ENCODE measurements at regions of chr16 and their contacts with region 1.

Region 1: GRCh38 chr16:84532291-84532724 is 27.8 kb upstream of the MEAK7 start:
- DNase-seq: peak; percentile 52 to 76 (median 71)
- ATAC-seq: peak; percentile 63 to 93 (median 91)
- H3K4me3 ChIP-seq: no peak overlapping the region
- H3K27ac ChIP-seq: peak overlapping the region; percentile 46 to 84 (median 62)
- H3K4me1 ChIP-seq: peaks cover 12 to 42% (median 30%) of the 10 kb centered on the region in 12 donors
- H3K27me3 ChIP-seq: no peaks in the 10 kb centered on the region
- CTCF ChIP-seq: no peak
- POLR2A ChIP-seq: no peak

Region 2: DNA sequence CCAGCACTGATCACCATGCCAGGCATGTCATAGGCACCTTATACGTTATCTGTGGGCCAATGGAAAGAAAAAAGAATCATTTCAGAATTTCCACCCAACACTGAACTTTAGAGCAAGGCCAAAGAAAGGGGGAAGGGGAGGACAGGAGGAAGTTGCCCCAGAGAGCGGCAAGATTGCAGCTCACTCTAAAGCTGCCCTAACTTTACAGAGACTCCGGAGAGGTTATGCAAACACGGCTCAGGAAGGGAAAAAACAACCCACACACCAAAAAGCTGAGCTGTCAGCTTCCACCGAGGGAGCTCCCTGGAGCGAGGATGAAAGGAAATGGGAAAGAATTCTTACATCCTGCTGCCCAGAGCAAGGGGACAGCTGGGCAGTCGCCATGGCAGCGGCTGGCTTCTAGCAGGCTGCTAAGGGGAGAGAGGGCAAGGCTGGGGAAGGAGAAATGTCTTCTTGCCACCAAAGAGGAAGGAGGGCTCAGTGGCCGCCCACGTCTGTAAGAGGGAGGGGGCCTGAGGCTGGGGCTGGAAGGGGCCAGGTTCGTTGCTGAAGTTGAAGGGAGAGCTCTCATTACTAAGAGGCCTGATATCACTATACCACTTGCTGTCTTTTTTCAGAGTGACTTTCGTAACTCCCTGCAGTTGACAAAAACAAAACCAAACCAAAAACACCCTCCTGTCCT is 67.4 kb after region 1 on chr16:
- intact Hi-C with region 1: loop called in 1 of 10 experiments (anchors 5 kb)
- DNase-seq: peak; percentile 40 to 84 (median 73)
- ATAC-seq: peak in 3 of 4 donors; percentile 57 to 74 (median 66)
- H3K4me3 ChIP-seq: peak overlapping the region in 8 of 12 donors; percentile 9 to 41 (median 18)
- H3K27ac ChIP-seq: peak overlapping the region in 11 of 12 donors; percentile 1 to 93 (median 42)
- H3K4me1 ChIP-seq: peaks cover 0 to 92% (median 10%) of the 10 kb centered on the region in 12 donors
- H3K27me3 ChIP-seq: no peaks in the 10 kb centered on the region
- CTCF ChIP-seq: no peak
- POLR2A ChIP-seq: no peak

Measured in heart left ventricle (tissue), 16 donors.